ENCODE measurements at regions of chr16 and their contacts with region 1.

Region 1: DNA sequence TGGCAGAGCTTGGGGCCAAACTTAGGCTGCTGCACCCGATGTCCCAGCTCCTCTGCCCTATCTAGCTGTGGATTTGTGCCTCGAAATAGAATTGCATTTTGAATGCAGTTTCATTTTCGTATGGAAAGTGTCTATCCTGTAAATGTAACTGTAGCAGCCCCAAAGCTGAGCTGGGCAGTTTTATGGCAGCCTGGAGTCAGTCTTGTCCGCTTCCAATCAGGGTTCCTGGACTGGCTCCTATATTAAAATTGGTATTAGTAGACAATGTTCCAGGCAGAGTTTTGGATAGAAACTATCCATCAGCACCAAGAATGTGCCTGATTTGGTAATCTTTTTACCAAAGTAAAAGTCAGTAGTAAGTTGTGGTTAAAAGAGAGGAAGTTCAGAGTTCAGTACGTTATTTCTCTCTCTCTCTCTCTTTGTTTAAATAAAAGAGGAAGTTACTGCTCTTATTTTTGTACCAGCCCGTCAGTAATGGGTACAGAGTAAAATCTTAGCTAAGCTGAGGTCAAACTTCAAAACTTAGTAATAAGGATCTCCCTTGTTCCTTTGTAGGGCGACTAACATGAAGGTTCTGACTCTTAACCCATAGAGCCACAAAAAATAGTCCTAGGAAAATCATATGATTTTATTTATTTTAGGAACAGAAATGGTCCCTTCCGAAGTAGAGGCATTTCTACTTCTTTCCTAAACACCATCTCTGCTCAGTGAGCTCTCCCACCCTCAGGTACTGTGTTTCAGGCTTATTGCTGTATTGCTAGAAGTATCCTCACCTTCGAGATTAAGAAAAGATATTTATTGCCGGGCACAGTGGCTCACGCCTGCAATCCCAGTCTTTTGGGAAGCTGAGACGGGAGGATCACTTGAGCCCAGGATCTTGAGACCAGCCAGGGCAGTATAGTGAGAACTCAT is 28.0 kb downstream of the PRKCB start:
- DNase-seq: peak in 1 of 2 donors; percentile 61
- ATAC-seq: peak; percentile 77 to 88 (median 86)
- H3K4me3 ChIP-seq: peak overlapping the region; percentile 17
- H3K4me3 Mint-ChIP-seq: peak overlapping the region; percentile 86
- H3K27ac ChIP-seq: peak overlapping the region; percentile 67
- H3K27ac Mint-ChIP-seq: peak overlapping the region; percentile 83 to 88
- H3K4me1 ChIP-seq: peaks cover 49% of the 10 kb centered on the region
- H3K4me1 Mint-ChIP-seq: peaks cover 68 to 77% of the 10 kb centered on the region in 2 donors
- H3K27me3 ChIP-seq: no peaks in the 10 kb centered on the region
- H3K27me3 Mint-ChIP-seq: no peaks in the 10 kb centered on the region
- CTCF ChIP-seq: no peak

Region 2: GRCh38 chr16:23826528-23827045 is 37.2 kb before region 1 on chr16:
- intact Hi-C with region 1: loop called (anchors 5 kb)
- DNase-seq: peak in 1 of 2 donors; percentile 76
- ATAC-seq: peak; percentile 53 to 91 (median 58)
- H3K4me3 ChIP-seq: no peak overlapping the region
- H3K4me3 Mint-ChIP-seq: peak overlapping the region; percentile 77
- H3K27ac ChIP-seq: peak overlapping the region; percentile 61
- H3K27ac Mint-ChIP-seq: peak overlapping the region; percentile 73 to 89
- H3K4me1 ChIP-seq: peaks cover 29% of the 10 kb centered on the region
- H3K4me1 Mint-ChIP-seq: peaks cover 42 to 43% of the 10 kb centered on the region in 2 donors
- H3K27me3 ChIP-seq: no peaks in the 10 kb centered on the region
- H3K27me3 Mint-ChIP-seq: no peaks in the 10 kb centered on the region
- CTCF ChIP-seq: no peak

Region 3: GRCh38 chr16:23847948-23848347 is 15.8 kb before region 1 on chr16:
- intact Hi-C with region 1: loop called (anchors 2 kb)
- DNase-seq: peak in 1 of 2 donors; percentile 82
- ATAC-seq: peak; percentile 96 to 98 (median 97)
- H3K4me3 ChIP-seq: no peak overlapping the region
- H3K4me3 Mint-ChIP-seq: peak overlapping the region; percentile 92
- H3K27ac ChIP-seq: peak overlapping the region; percentile 36
- H3K27ac Mint-ChIP-seq: peak overlapping the region; percentile 81
- H3K4me1 ChIP-seq: peaks cover 25% of the 10 kb centered on the region
- H3K4me1 Mint-ChIP-seq: peaks cover 71 to 84% of the 10 kb centered on the region in 2 donors
- H3K27me3 ChIP-seq: no peaks in the 10 kb centered on the region
- H3K27me3 Mint-ChIP-seq: no peaks in the 10 kb centered on the region
- CTCF ChIP-seq: no peak

Region 4: DNA sequence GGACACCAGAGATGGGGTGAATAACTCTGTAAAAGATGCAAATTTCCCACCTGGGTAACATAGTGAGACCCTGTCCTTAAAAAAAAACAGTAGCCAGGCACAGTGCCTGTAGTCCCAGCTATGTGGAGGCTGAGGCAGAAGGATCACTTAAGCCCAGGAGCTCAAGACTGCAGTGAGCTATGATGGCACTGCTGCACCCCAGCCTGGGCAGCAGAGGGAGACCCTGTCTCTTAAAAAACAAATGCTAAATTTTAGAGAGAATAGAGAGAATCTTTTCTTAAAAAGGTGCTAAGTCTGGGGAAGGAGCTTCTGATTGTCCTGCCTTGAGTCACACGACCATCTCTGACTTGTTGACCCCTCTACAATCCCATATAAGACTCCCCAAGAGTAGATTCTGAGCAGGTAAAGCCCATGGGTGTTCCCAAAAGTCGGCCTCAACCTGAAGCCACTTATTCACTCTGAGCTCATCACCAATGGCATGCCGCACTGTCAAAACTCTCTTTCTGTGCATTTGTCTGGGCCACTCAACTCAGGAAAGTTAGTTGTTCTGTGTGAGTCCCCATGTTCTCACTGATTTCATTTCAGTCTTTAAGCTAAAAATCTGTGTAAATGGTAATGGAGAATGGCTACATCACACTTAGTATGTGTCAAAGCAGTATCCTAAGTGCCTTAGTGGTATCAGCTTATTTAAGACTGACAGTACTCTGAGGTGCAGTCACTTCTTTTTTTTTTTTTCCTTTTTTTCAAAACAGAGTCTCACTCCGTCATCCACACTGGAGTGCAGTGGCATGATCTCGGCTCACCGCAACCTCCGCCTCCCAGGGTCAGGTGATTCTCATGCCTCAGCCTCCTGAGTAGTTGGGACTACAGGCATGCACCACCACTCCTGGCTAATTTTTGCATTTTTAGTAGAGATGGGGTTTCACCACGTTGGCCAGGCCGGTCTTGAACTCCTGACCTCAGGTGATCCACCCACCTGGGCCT is 13.6 kb after region 1 on chr16:
- intact Hi-C with region 1: no loop called
- DNase-seq: peak in 1 of 2 donors; percentile 54
- ATAC-seq: no peak
- H3K4me3 ChIP-seq: no peak overlapping the region
- H3K4me3 Mint-ChIP-seq: no peak overlapping the region
- H3K27ac ChIP-seq: no peak overlapping the region
- H3K27ac Mint-ChIP-seq: peak overlapping the region; percentile 17 to 71
- H3K4me1 ChIP-seq: peaks cover 33% of the 10 kb centered on the region
- H3K4me1 Mint-ChIP-seq: peaks cover 77 to 81% of the 10 kb centered on the region in 2 donors
- H3K27me3 ChIP-seq: no peaks in the 10 kb centered on the region
- H3K27me3 Mint-ChIP-seq: no peaks in the 10 kb centered on the region
- CTCF ChIP-seq: no peak

Region 5: DNA sequence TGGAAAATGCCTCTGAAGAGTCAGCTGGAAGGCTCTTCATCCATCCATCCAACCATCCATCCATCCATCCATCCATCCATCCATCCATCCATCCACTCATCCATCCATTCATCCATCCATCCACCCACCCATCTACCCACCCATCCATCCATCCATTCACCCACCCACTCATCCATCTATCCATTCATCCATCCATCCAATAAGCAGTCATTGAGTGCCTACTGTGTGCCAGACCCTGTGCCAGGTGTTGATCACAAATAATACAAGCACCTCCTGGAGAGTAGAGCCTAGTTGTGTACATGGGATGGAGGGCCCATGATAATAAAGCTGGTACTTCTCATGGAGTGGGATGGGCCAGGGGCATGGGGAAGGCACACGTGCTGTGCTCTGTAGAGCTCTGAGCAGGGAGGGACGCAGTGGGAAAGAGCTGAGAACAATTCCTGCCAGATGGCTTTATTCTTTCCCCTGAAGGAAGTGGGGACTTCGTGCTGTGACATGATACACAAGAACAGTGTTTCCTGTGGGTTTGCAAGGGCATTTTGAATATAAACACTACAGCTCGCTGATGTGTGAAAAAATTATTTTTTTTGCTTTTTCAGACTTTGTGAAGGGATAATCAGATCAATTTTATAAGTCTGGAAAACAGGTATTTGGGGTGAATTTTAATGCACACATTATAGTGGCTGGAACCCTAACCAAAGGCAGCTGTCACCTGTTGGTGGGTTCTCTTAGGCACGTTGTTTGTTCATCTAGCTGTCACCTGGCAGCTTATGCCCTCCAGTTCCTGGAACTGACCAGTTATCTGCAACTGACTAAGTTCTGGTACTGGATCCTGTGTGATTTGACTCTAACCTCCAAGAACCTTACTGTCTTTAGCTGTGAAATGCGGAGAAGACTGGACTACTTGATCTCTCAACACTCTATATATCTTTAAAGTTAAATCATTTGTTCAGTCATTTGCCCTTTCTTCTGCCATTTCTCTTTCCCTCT is 33.4 kb after region 1 on chr16:
- intact Hi-C with region 1: loop called (anchors 5 kb)
- DNase-seq: peak in 1 of 2 donors; percentile 35
- ATAC-seq: peak in 2 of 3 donors; percentile 63 to 67
- H3K4me3 ChIP-seq: no peak overlapping the region
- H3K4me3 Mint-ChIP-seq: peak overlapping the region; percentile 72
- H3K27ac ChIP-seq: peak overlapping the region; percentile 51
- H3K27ac Mint-ChIP-seq: peak overlapping the region; percentile 81 to 85
- H3K4me1 ChIP-seq: peaks cover 31% of the 10 kb centered on the region
- H3K4me1 Mint-ChIP-seq: peaks cover 61 to 74% of the 10 kb centered on the region in 2 donors
- H3K27me3 ChIP-seq: no peaks in the 10 kb centered on the region
- H3K27me3 Mint-ChIP-seq: no peaks in the 10 kb centered on the region
- CTCF ChIP-seq: no peak

Region 6: DNA sequence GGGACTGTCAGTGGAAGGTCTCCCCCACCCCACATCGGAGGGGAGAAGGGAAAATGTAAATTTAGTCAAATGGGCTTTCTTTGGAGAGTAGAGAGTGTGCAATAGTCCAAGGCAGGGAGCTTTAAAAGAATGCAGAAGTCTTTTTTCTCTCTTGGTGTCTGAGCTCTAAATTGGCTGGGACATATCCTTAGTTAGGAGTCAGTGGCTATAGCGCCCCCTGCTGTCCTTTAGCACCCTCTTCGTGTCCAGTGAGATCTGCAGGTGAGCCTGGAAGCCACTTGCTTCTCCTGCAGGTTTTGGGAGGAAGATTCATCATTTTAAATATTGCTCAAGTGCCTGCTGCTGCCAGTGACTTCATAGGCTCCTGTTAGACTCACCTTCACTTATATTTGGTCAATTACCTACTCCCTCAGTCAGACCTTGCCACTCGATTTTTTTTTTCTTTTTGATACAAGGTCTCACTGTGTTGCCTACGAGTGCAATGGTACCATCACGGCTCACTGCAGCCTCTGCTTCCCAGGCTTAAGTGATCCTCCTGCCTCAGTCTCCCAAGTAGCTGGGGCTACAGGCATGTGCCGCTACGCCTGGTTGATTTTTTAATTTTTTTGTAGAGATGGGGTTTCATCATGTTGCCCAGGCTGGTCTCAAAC is 146.8 kb after region 1 on chr16:
- intact Hi-C with region 1: no loop called
- DNase-seq: peak; percentile 68 to 93
- ATAC-seq: peak; percentile 54 to 67 (median 56)
- H3K4me3 ChIP-seq: no peak overlapping the region
- H3K4me3 Mint-ChIP-seq: no peak overlapping the region
- H3K27ac ChIP-seq: no peak overlapping the region
- H3K27ac Mint-ChIP-seq: no peak overlapping the region
- H3K4me1 ChIP-seq: peaks cover 50% of the 10 kb centered on the region
- H3K4me1 Mint-ChIP-seq: peaks cover 76 to 83% of the 10 kb centered on the region in 2 donors
- H3K27me3 ChIP-seq: no peaks in the 10 kb centered on the region
- H3K27me3 Mint-ChIP-seq: no peaks in the 10 kb centered on the region
- CTCF ChIP-seq: peak; percentile 84

Measured in natural killer cell (primary cell).